ENCODE measurements at regions of chr4 and their contacts with region 1.

Region 1: GRCh38 chr4:3836756-3837601 is 70.8 kb downstream of the ADRA2C start:
- DNase-seq: no peak
- H3K4me3 ChIP-seq: no peak overlapping the region
- H3K27ac ChIP-seq: no peak overlapping the region
- H3K4me1 ChIP-seq: no peaks in the 10 kb centered on the region
- H3K27me3 ChIP-seq: no peaks in the 10 kb centered on the region
- CTCF ChIP-seq: no peak

Region 2: GRCh38 chr4:3461478-3462291 is 375.3 kb before region 1 on chr4:
- CTCF ChIA-PET with region 1: no interaction called
- dilution Hi-C with region 1: no loop called
- in situ Hi-C with region 1: no loop called
- intact Hi-C with region 1: no loop called
- DNase-seq: peak; percentile 76
- H3K4me3 ChIP-seq: no peak overlapping the region
- H3K27ac ChIP-seq: no peak overlapping the region
- H3K4me1 ChIP-seq: peaks cover 24% of the 10 kb centered on the region
- H3K27me3 ChIP-seq: no peaks in the 10 kb centered on the region
- CTCF ChIP-seq: no peak

Region 3: DNA sequence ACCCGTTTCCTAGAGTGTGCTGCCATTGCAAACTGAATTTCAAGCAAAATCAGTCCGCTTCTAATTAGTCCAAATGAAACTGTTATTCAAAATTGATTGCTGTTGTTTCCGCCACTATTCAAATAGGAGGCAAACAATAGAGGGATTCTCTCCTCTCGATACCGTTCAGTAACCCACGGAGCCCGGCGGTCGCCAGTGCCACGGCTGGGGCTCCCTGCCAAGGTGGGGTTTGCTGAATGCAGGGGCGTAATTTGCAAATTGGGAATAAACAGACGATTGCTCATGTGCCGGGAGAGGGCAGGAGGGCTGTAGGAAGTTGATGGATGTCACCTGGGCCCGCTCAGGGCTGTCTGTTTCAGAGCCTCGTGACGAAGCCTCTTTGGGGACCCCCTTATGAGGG is 62.0 kb before region 1 on chr4:
- CTCF ChIA-PET with region 1: no interaction called
- dilution Hi-C with region 1: loop called (anchors 5 kb)
- in situ Hi-C with region 1: no loop called
- intact Hi-C with region 1: no loop called
- DNase-seq: no peak
- H3K4me3 ChIP-seq: no peak overlapping the region
- H3K27ac ChIP-seq: no peak overlapping the region
- H3K4me1 ChIP-seq: no peaks in the 10 kb centered on the region
- H3K27me3 ChIP-seq: no peaks in the 10 kb centered on the region
- CTCF ChIP-seq: no peak

Measured in mammary epithelial cell (primary cell).